AG04450 (cell line): ENCODE measurements at regions of chr1 and their contacts with region 1.

Region 1: DNA sequence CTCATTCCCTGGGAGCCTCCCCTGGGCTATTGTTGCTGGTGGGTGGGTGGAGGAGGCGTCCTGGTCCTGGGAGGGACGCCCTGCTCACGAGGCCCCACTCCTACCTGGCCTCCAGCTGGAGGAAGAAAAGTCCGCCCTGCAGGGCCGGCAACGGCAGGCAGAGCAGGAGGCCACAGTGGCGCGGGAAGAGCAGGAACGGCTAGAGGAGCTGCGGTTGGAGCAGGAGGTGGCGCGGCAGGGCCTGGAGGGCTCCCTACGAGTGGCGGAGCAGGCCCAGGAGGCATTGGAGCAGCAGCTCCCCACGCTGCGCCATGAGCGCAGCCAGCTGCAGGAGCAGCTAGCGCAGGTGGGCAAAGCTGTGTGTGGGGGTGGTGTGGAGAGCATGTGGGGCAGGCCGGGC is 24.9 kb downstream of the CROCC start:
- DNase-seq: no peak
- H3K4me3 ChIP-seq: no peak overlapping the region
- H3K27ac ChIP-seq: no peak overlapping the region
- H3K27me3 ChIP-seq: no peaks in the 10 kb centered on the region
- CTCF ChIP-seq: no peak

Region 2: GRCh38 chr1:16888860-16889816 is 57.5 kb before region 1 on chr1:
- CTCF ChIA-PET with region 1: no interaction called
- POLR2A ChIA-PET with region 1: no interaction called
- DNase-seq: no peak
- H3K4me3 ChIP-seq: peak overlapping the region; percentile 50
- H3K27ac ChIP-seq: no peak overlapping the region
- H3K27me3 ChIP-seq: peaks cover 30% of the 10 kb centered on the region
- CTCF ChIP-seq: peak; percentile 11; the same call in 1 of the 2 replicates

Region 3: GRCh38 chr1:16960560-16961296 is 14.1 kb after region 1 on chr1:
- CTCF ChIA-PET with region 1: interaction called, 46 read pairs
- POLR2A ChIA-PET with region 1: no interaction called
- DNase-seq: no peak
- H3K4me3 ChIP-seq: peak overlapping the region; percentile 40
- H3K27ac ChIP-seq: no peak overlapping the region
- H3K27me3 ChIP-seq: no peaks in the 10 kb centered on the region
- CTCF ChIP-seq: peak; percentile 77

Region 4: DNA sequence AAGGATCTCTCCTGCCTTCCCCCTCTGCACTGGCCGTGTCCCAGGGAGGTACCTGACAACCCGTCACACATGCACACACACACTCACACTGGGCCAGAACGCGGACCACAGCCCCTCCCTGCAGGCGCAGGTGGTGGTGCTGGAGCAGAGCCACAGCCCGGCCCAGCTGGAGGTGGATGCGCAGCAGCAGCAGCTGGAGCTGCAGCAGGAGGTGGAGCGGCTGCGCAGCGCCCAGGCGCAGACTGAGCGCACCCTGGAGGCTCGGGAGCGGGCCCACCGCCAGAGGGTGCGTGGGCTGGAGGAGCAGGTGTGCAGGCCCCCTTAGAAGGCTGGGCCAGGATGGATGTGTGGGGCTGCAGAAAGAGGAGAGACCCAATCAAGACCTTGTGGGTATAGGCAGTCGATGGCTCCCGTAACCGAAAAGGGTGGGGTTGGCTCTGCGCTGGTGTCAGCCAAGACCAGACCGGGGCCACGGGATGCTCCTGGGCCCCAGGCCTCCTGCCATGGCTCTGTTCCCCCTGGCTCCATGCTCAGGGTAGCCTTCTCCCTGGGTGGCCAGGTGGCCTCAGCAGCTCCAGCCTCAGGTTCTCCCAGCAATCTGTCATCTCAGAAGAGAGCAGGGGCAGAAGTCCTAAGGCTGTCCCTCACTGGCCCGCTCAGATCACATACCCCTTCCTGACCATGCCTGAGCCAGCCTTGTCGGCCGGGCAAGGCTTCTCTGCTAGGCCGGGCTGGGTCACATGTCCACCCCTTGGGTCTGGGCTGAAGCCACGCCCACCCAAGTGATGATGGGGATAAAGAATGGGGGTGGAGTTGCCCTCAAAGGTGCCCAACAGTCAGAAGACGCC is 24.9 kb after region 1 on chr1:
- CTCF ChIA-PET with region 1: interaction called, 10 read pairs
- POLR2A ChIA-PET with region 1: no interaction called
- DNase-seq: no peak
- H3K4me3 ChIP-seq: no peak overlapping the region
- H3K27ac ChIP-seq: no peak overlapping the region
- H3K27me3 ChIP-seq: no peaks in the 10 kb centered on the region
- CTCF ChIP-seq: no peak

Region 5: DNA sequence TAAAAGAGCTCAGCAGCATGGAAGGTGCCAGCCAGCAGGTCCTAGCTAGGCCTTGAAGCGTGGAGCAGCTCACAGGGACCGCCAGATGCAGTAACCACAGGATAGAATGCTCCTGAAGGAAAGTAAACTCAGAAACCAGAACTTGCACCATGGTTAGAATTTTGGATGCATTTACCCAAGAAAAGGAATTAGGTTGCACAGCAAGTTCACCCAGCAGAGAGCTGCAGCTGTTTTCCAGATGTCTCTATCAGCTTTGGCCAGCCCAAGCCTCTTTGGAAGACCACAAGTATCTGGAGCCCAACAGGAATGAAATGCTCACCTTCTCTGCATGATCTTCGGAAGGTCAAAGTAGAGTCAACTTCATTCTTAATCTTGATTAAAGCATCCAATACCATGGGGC is 86.1 kb after region 1 on chr1:
- CTCF ChIA-PET with region 1: interaction called, 14 read pairs
- POLR2A ChIA-PET with region 1: no interaction called
- DNase-seq: no peak
- H3K4me3 ChIP-seq: no peak overlapping the region
- H3K27ac ChIP-seq: peak overlapping the region; percentile 24
- H3K27me3 ChIP-seq: no peaks in the 10 kb centered on the region
- CTCF ChIP-seq: no peak

Region 6: DNA sequence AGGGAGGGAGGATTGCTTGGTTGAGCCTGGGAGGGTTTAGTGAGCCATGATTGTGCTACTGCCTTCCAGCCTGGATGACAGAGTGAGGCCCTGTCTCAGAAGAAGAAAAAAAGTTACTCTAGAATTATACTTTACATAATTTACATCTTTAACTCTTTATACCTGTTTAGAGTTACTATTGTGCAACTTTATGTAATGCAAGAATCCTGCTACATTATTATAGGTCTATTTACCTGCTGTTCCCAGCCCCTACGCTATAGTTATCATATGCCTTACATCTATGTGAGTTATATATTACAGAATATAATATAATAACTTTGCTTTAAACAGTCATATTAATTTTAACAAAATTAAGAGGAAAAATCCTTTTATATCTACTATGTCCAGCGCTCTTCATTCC is 92.9 kb after region 1 on chr1:
- CTCF ChIA-PET with region 1: interaction called, 126 read pairs
- POLR2A ChIA-PET with region 1: no interaction called
- DNase-seq: no peak
- H3K4me3 ChIP-seq: no peak overlapping the region
- H3K27ac ChIP-seq: no peak overlapping the region
- H3K27me3 ChIP-seq: no peaks in the 10 kb centered on the region
- CTCF ChIP-seq: no peak

Region 7: GRCh38 chr1:17045634-17046333 is 99.1 kb after region 1 on chr1:
- CTCF ChIA-PET with region 1: interaction called, 126 read pairs
- POLR2A ChIA-PET with region 1: interaction called, 3 read pairs
- DNase-seq: peak; percentile 44
- H3K4me3 ChIP-seq: no peak overlapping the region
- H3K27ac ChIP-seq: no peak overlapping the region
- H3K27me3 ChIP-seq: no peaks in the 10 kb centered on the region
- CTCF ChIP-seq: peak; percentile 79